Aorta (tissue), 5 donors: ENCODE measurements at regions of chr11 and their contacts with region 1.

Region 1: DNA sequence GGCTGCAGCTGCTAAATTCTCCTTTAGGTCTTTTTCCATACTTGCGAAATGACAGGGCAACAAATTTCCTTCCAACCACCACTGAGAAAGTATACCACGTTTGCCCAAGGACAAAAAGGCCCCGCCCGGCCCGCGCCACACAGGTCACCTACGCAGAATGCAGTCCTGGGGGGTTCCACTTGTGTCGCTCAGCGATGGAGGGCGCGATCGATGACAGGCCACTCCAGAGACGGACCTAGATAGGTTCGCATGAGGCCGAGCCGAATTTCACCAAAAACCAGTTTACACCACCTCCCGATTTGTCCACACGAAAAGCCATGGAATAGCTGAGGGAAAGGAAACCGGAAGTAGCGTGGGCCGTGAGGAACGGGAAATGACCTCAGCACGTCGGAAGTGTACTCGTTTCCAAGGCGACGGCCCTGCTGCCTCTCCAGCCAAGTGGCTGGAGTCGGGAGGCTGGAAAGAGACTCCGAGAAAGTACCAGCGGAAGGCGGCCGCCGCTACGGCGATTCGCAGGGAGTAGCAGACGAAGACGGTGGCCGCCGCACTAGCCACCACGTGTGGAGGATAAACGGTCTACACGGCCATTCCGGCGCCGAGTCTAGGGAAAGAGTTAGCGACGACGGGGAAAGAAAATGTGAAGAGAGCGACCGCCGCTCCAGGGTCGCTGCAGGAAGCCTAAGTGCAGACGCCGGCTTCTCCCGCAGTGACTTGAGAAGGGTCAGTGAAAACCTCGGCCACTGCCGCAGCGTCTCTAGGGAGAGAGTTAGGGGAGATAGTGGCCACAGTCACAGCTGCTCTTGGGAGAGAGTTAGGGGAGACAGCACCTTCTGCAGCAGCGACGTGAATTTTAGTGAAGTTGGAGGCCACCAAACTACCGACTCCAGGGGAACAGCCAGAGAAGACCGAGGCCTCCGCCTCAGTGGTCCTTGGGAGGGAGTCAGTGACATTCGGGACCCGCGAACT is at the start of gene ANKRD42:
- DNase-seq: peak; percentile 96 to 97
- ATAC-seq: peak; percentile 97
- H3K4me3 ChIP-seq: peak within 1 kb of the TSS; percentile 97 to 98
- H3K27ac ChIP-seq: peak within 1 kb of the TSS; percentile 15 to 95
- H3K4me1 ChIP-seq: peaks cover 6 to 19% of the 10 kb centered on the region in 2 donors
- H3K27me3 ChIP-seq: no peaks in the 10 kb centered on the region
- total RNA-seq, gene ANKRD42: 12.9 to 14.7 TPM

Region 2: DNA sequence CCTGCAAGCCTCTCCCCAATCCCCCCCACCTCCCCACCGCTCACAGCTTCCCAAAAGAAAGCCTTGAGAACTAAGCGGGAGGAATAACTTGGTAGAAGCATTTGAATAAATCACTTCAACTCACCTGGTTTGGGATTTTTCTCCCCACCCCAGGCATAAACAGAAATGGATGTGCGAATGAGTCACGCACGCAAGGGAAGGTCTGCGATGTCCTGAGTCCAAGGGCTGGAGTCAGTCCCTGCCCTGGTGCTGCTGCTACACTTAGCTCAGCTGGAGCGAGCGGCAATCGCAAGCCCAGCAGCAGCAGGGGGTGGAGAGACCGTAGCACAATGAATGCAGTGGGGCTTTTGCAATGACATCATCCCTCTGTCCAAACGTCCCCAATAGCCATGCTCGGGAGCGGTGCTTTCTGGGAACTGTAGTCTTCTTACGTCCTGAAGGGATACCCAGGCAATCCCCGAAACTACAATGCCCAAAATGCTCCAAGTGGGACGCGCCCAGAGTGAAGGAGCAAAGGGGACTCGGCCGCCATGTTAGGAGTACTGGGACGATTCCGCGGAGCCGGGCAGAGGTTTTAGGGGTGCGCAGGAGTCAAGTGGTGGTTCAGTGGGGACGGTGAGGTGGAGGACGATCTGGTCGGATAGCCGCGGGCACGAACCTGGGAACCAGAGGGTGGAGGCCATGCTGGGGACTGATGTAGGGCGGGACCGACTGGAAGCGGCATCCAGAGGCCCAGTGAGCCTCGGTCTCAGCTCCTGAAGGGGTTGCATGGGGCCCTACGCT is 121.8 kb before region 1 on chr11 and contains the start of gene RAB30:
- intact Hi-C with region 1: loop called in 1 of 2 experiments (anchors 5 kb)
- DNase-seq: peak; percentile 94 to 98
- ATAC-seq: peak; percentile 97
- H3K4me3 ChIP-seq: peak within 1 kb of the TSS; percentile 76 to 88
- H3K27ac ChIP-seq: peak within 1 kb of the TSS; percentile 86 to 92
- H3K4me1 ChIP-seq: peaks cover 2 to 5% of the 10 kb centered on the region in 2 donors
- H3K27me3 ChIP-seq: no peaks in the 10 kb centered on the region
- total RNA-seq, gene RAB30: 20.3 to 44.1 TPM

Region 3: GRCh38 chr11:83156150-83156995 is 37.2 kb before region 1 on chr11:
- intact Hi-C with region 1: loop called in 1 of 2 experiments (anchors 2 kb)
- DNase-seq: peak; percentile 99
- ATAC-seq: peak; percentile 97
- H3K4me3 ChIP-seq: peak overlapping the region; percentile 82 to 97
- H3K27ac ChIP-seq: peak overlapping the region; percentile 30 to 83
- H3K4me1 ChIP-seq: no peaks in the 10 kb centered on the region
- H3K27me3 ChIP-seq: no peaks in the 10 kb centered on the region

Region 4: DNA sequence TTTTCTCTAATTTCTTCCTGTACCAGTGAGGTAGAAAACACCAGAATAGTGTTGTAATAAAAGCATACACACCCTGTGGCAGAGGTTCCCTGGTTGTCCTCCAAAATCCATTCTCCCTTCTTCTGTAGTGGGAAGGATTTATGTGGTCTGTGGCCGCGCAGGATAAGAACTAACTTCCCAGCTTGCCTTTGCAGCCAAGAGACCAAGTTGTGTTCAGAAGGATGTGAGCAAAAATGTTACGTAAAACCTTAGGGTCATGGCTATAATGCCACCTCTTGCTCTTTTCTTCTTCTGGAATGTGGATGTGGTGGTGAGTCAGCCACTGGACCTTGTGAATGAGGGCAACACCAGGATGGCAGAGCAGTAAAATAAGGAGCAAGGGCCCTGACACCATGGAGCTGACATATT is 64.2 kb after region 1 on chr11:
- intact Hi-C with region 1: loop called in 1 of 2 experiments (anchors 5 kb)
- DNase-seq: peak in 1 of 2 donors; percentile 47
- ATAC-seq: peak; percentile 40
- H3K4me3 ChIP-seq: peak overlapping the region in 1 of 2 donors; percentile 12
- H3K27ac ChIP-seq: peak overlapping the region; percentile 12 to 63
- H3K4me1 ChIP-seq: peaks cover 0 to 7% of the 10 kb centered on the region in 2 donors
- H3K27me3 ChIP-seq: no peaks in the 10 kb centered on the region

Region 5: GRCh38 chr11:83285771-83286528 is 92.4 kb after region 1 on chr11 and contains the start of gene CCDC90B:
- intact Hi-C with region 1: loop called (anchors 10 kb)
- DNase-seq: peak; percentile 97 to 98
- ATAC-seq: peak; percentile 99
- H3K4me3 ChIP-seq: peak within 1 kb of the TSS; percentile 68 to 86
- H3K27ac ChIP-seq: peak within 1 kb of the TSS in 1 of 2 donors; percentile 99
- H3K4me1 ChIP-seq: peaks cover 0 to 5% of the 10 kb centered on the region in 2 donors
- H3K27me3 ChIP-seq: no peaks in the 10 kb centered on the region
- total RNA-seq, gene CCDC90B: 35.0 to 38.6 TPM